Testis (tissue), 5 donors: ENCODE measurements at regions of chr1 and their contacts with region 1.

Region 1: GRCh38 chr1:94805912-94806311 is 14.2 kb upstream of the SLC44A3 start:
- DNase-seq: peak; percentile 78
- H3K4me3 ChIP-seq: no peak overlapping the region
- H3K27ac ChIP-seq: no peak overlapping the region
- H3K4me1 ChIP-seq: peaks cover 53% of the 10 kb centered on the region
- H3K27me3 ChIP-seq: no peaks in the 10 kb centered on the region
- CTCF ChIP-seq: peak; percentile 95 to 98 (median 96)
- POLR2A ChIP-seq: no peak

Region 2: GRCh38 chr1:94481473-94481933 is 324.4 kb before region 1 on chr1:
- intact Hi-C with region 1: loop called (anchors 5 kb)
- DNase-seq: peak; percentile 57
- H3K4me3 ChIP-seq: no peak overlapping the region
- H3K27ac ChIP-seq: no peak overlapping the region
- H3K4me1 ChIP-seq: no peaks in the 10 kb centered on the region
- H3K27me3 ChIP-seq: no peaks in the 10 kb centered on the region
- CTCF ChIP-seq: peak; percentile 60 to 82 (median 76)
- POLR2A ChIP-seq: no peak

Region 3: DNA sequence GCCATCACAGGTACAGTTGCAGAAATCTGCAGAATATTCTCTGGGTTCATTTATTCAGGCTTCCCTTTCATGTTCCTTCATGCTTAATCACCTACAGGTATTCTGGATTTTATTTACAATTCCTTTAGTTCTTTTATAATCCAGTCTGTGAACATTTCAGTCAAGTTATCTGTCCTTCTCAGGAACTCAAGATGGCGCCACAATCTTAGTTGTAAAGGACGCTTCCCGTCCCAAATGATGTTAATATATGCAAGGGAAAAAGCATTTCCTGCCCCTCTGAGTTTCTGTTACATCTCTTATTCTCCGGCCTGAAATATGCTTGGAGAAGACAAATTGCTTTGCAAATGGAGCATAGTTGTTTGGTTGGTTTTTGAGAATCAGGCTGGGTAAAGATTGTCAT is 283.6 kb before region 1 on chr1:
- intact Hi-C with region 1: loop called (anchors 10 kb)
- DNase-seq: no peak
- H3K4me3 ChIP-seq: no peak overlapping the region
- H3K27ac ChIP-seq: no peak overlapping the region
- H3K4me1 ChIP-seq: peaks cover 3% of the 10 kb centered on the region
- H3K27me3 ChIP-seq: no peaks in the 10 kb centered on the region
- CTCF ChIP-seq: peak in 1 of 3 experiments; percentile 19
- POLR2A ChIP-seq: no peak

Region 4: GRCh38 chr1:94597701-94598100 is 208.2 kb before region 1 on chr1:
- intact Hi-C with region 1: no loop called
- DNase-seq: no peak
- H3K4me3 ChIP-seq: no peak overlapping the region
- H3K27ac ChIP-seq: no peak overlapping the region
- H3K4me1 ChIP-seq: peaks cover 6% of the 10 kb centered on the region
- H3K27me3 ChIP-seq: no peaks in the 10 kb centered on the region
- CTCF ChIP-seq: no peak
- POLR2A ChIP-seq: no peak

Region 5: GRCh38 chr1:94608142-94608851 is 197.6 kb before region 1 on chr1:
- intact Hi-C with region 1: no loop called
- DNase-seq: no peak
- H3K4me3 ChIP-seq: no peak overlapping the region
- H3K27ac ChIP-seq: no peak overlapping the region
- H3K4me1 ChIP-seq: no peaks in the 10 kb centered on the region
- H3K27me3 ChIP-seq: no peaks in the 10 kb centered on the region
- CTCF ChIP-seq: no peak
- POLR2A ChIP-seq: no peak

Region 6: GRCh38 chr1:94658221-94658620 is 147.7 kb before region 1 on chr1:
- intact Hi-C with region 1: no loop called
- DNase-seq: no peak
- H3K4me3 ChIP-seq: no peak overlapping the region
- H3K27ac ChIP-seq: peak overlapping the region; percentile 2 to 65
- H3K4me1 ChIP-seq: peaks cover 26% of the 10 kb centered on the region
- H3K27me3 ChIP-seq: no peaks in the 10 kb centered on the region
- CTCF ChIP-seq: no peak
- POLR2A ChIP-seq: no peak

Region 7: DNA sequence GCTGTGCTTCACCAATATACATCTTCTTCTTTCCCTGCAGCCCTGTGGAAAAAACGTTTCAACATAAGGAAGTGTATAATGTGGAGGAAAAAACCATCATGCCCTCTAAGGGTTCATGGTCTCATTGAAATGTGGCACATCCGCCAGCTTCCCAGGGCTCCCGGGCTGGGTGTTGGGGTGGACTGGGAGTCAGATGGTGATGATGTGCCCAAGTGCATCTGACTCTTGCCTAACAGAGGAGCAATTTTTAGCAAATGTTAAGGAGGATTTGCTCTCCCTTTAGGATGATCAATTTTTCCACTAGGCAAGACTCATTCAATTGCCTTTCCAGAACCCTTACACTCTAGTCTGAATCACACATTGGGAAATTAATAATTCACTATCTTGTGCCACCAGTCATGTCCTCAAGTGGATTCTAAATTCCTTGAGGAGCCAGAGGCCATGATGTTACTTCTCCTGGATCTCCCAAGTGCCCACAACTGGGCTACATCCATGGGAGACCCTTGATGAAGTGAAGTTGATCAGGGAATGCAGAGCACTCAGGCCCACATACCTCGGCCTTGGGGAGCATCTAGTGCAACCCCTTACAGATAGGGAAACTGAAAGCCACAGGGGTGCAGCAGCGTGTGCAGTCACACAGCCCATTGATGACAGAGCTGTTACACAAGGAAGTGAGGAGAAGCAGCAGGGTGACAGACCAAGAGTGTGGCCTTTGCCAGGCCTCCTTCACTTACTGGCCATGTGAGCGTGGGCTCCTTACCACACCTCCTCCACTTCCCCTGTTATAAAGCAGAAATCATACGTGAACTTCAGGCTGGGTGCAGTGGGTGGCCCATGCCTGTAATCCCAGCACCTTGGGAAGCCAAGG is 85.8 kb before region 1 on chr1:
- intact Hi-C with region 1: no loop called
- DNase-seq: no peak
- H3K4me3 ChIP-seq: no peak overlapping the region
- H3K27ac ChIP-seq: no peak overlapping the region
- H3K4me1 ChIP-seq: no peaks in the 10 kb centered on the region
- H3K27me3 ChIP-seq: no peaks in the 10 kb centered on the region
- CTCF ChIP-seq: no peak
- POLR2A ChIP-seq: no peak